Common myeloid progenitor, CD34-positive (primary cell): ENCODE measurements at regions of chr10 and their contacts with region 1.

Region 1: DNA sequence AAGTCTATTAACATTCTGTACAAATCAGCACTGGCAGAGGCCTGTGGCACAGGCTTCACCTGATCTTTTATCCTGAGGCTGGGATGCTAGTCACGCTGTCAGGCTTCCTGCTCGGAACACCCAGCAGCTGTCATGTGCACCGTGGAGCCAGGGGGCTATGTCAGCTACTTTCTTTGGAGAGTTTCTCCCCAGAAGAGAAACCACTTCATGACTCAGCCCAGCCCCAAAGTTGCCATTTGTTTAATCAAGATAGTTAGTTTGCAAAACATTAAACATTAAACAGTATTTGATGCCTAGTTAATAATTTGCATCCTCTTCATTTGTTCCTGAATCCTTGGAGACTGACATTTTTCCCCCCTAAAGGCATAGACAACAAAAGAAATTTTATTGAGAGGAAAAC is at the start of gene HABP2:
- DNase-seq: no peak
- H3K4me3 ChIP-seq: no peak within 1 kb of the TSS
- H3K27ac ChIP-seq: no peak within 1 kb of the TSS
- H3K4me1 ChIP-seq: peaks cover 5 to 47% (median 19%) of the 10 kb centered on the region in 4 experiments
- H3K27me3 ChIP-seq: no peaks in the 10 kb centered on the region

Region 2: DNA sequence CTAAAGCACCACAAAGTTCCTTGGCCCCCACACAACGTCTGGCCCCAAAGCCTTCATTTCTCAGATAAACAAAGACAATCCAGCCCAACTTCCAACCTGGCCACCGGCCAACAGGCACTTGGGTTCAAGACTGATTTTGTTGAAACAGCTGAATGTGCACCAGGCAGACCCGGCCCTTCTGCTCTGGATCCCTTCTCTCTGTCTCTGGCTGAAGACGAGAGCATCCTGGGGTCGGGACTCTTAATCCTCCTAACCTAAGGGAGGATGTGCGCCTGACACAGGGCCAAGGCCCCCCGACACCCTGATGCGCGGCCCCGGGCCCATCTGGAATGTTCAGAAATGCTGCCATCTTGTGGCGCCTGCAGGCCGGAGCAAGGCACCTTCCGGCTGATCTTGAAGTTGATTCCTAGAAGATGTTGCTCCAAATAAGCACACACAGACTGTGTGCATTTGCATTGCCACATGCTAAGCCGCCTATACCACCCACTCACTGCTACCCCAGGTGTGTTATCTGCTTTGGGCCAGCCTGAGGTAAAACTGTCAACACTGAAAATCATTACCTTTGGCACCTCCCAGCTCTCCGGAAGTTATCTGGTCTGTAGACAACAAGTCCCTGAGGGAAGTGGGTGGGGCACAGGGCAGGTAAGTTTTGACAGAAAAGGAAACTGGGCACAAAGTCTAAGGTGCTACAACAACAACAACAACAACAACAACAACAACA is 98.2 kb before region 1 on chr10:
- CTCF ChIA-PET with region 1: no interaction called
- POLR2A ChIA-PET with region 1: no interaction called
- DNase-seq: peak; percentile 48 to 68 (median 68)
- H3K4me3 ChIP-seq: no peak overlapping the region
- H3K27ac ChIP-seq: no peak overlapping the region
- H3K4me1 ChIP-seq: no peaks in the 10 kb centered on the region
- H3K27me3 ChIP-seq: peaks cover 0 to under 1% (median 0%) of the 10 kb centered on the region in 5 experiments

Region 3: GRCh38 chr10:113521123-113521795 is 31.4 kb before region 1 on chr10:
- CTCF ChIA-PET with region 1: interaction called, 25 read pairs
- POLR2A ChIA-PET with region 1: interaction called, 3 read pairs
- DNase-seq: peak; percentile 58 to 80 (median 76)
- H3K4me3 ChIP-seq: no peak overlapping the region
- H3K27ac ChIP-seq: no peak overlapping the region
- H3K4me1 ChIP-seq: peaks cover 0 to 8% (median 1%) of the 10 kb centered on the region in 4 experiments
- H3K27me3 ChIP-seq: no peaks in the 10 kb centered on the region